ENCODE measurements at regions of chr10 and their contacts with region 1.

Region 1: DNA sequence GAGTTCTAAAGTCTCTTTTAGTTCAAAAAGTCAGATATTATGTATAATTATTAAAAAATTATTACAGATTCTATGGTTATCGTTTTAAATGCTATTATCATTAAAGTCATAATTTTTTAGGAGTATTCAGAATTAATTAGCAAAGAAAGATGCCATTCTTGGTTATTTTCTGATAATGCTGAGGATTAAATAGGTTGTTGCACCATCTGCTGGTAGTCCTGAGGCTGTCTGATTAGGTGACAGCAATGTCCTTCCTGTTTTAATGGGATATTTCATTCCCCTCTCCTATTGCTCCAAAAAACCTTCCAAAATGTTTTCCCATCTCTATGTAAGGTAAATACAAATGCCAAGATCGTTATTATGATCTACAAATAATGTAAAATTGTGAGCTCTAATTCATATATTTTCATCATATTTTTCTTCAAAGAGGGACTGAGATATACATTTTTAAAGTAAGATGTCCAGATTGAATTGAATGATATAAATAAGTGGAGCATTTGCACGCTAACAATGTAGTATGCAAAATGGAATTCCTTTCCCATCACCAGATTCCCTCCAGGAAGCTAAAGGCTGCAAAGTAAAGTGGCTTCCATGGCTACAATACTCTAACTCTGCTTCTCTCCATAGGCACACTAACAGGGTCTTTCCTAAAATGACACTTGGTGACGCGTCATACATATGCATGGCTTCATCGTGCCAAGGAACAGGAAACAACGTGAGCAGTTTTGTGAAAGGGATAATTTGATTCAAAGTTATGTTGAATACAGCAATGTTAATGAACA is 58.8 kb upstream of the AKR1E2 start:
- DNase-seq: no peak
- H3K4me3 ChIP-seq: no peak overlapping the region
- H3K27ac ChIP-seq: no peak overlapping the region
- H3K4me1 ChIP-seq: peaks cover 19% of the 10 kb centered on the region
- H3K27me3 ChIP-seq: no peaks in the 10 kb centered on the region
- CTCF ChIP-seq: peak; percentile 72

Region 2: DNA sequence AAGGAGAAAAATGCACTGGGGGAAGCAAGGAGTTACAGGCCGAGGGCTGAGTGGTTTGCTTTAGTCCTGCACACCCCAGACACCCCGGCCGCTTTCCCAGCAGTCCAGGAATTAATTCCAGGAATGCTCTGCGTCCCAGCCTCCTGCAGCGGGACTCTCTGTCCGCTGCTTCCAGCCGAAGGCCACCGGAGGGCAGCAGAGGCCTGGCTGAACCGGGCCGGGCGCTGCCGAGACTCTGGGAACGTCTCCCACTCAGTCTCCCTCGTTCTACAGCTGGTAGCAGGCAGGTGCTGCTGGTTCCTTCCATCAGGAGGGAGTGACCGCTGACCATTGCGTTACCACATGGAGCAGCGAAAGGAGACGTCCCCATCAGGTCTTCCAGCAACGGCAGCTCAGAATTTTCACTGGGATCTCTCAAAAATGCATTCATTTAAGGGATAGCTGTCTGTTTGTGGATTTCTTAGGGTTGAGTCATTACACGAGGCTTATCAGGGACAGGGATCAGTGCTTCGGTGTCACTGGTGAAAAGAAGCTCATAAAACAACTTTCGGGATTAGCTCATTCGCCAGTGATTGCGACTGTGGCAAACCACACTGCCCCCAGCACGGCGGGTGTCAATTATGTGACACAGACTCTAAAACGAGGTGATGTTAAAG is 1569.7 kb before region 1 on chr10:
- CTCF ChIA-PET with region 1: interaction called, 9 read pairs
- POLR2A ChIA-PET with region 1: no interaction called
- intact Hi-C with region 1: loop called (anchors 1 kb)
- DNase-seq: peak; percentile 85 to 86
- H3K4me3 ChIP-seq: peak overlapping the region; percentile 53; the same call in 1 of the 2 replicates
- H3K27ac ChIP-seq: peak overlapping the region; percentile 79
- H3K4me1 ChIP-seq: peaks cover 10% of the 10 kb centered on the region
- H3K27me3 ChIP-seq: no peaks in the 10 kb centered on the region
- CTCF ChIP-seq: peak; percentile 79

Region 3: GRCh38 chr10:3623746-3624145 is 1143.5 kb before region 1 on chr10:
- CTCF ChIA-PET with region 1: no interaction called
- POLR2A ChIA-PET with region 1: no interaction called
- intact Hi-C with region 1: loop called (anchors 5 kb)
- DNase-seq: peak; percentile 55 to 92
- H3K4me3 ChIP-seq: peak overlapping the region; percentile 49; the same call in 1 of the 2 replicates
- H3K27ac ChIP-seq: peak overlapping the region; percentile 100
- H3K4me1 ChIP-seq: peaks cover 48% of the 10 kb centered on the region
- H3K27me3 ChIP-seq: no peaks in the 10 kb centered on the region
- CTCF ChIP-seq: no peak

Region 4: DNA sequence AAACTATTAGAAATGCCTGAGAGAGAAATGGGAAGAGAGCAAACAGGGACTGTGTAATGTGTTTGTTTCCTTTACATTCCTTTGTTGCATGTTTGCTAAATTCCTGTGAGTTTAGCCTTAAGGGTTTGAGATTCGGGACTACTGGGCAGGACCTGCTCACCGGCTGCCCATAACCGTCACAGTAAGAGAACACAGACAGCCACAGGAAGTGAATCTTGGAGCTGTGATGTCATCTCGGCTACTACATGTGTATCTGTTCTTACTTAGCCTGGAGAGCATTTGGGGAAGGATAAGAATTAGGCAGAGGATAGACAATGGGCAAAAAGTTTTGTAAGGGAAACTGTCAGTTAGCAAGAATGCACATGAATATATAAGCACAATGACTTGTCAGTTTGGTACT is 497.1 kb before region 1 on chr10:
- CTCF ChIA-PET with region 1: no interaction called
- POLR2A ChIA-PET with region 1: no interaction called
- intact Hi-C with region 1: loop called (anchors 10 kb)
- DNase-seq: peak; percentile 24 to 36
- H3K4me3 ChIP-seq: no peak overlapping the region
- H3K27ac ChIP-seq: no peak overlapping the region
- H3K4me1 ChIP-seq: peaks cover 6% of the 10 kb centered on the region; the same call in 1 of the 2 replicates
- H3K27me3 ChIP-seq: no peaks in the 10 kb centered on the region
- CTCF ChIP-seq: no peak

Region 5: GRCh38 chr10:4541292-4541691 is 225.9 kb before region 1 on chr10:
- CTCF ChIA-PET with region 1: no interaction called
- POLR2A ChIA-PET with region 1: no interaction called
- intact Hi-C with region 1: loop called (anchors 10 kb)
- DNase-seq: peak; percentile 58 to 80
- H3K4me3 ChIP-seq: no peak overlapping the region
- H3K27ac ChIP-seq: peak overlapping the region; percentile 60
- H3K4me1 ChIP-seq: peaks cover 10% of the 10 kb centered on the region
- H3K27me3 ChIP-seq: no peaks in the 10 kb centered on the region
- CTCF ChIP-seq: no peak

Region 6: DNA sequence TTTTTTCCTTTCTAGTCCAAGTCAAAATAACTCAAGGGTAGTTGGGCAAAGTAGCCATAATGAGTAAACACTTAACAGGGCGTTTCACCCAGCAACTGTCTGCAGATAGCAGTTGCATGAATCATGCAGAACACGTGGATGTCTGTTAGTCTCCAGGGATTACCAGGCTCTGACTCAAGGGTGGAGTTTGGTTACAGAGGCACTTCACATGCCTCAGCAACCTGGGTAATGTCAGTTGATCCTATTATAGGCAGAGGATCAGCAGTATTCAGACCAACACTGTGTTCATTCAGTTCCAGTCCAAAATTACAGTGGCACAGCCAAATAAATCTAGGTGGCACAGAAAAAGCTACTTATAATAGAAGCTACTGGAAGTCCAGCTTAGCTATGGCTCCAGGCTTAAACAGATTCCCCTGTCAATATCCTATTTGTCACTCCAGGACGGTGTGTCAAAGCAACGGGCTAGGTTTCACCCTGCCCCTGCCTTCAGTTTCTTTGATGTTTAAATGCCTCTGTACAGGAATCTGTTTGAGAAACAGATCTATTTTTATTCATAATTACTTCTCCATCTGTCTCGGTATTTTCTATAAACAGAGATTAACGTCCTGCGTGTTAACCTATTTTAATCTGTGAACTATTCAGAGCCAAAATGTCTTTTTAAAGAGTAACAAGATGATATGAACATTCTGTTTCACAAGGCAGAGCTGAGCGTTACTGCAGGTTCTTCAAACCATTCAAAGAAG is 103.9 kb before region 1 on chr10:
- CTCF ChIA-PET with region 1: no interaction called
- POLR2A ChIA-PET with region 1: no interaction called
- intact Hi-C with region 1: loop called (anchors 2 kb)
- DNase-seq: peak; percentile 75 to 94
- H3K4me3 ChIP-seq: peak overlapping the region; percentile 17; the same call in 1 of the 2 replicates
- H3K27ac ChIP-seq: peak overlapping the region; percentile 96
- H3K4me1 ChIP-seq: peaks cover 24% of the 10 kb centered on the region
- H3K27me3 ChIP-seq: no peaks in the 10 kb centered on the region
- CTCF ChIP-seq: no peak

Measured in PC-9 (cell line).